ENCODE measurements at regions of chr12 and their contacts with region 1.

Region 1: GRCh38 chr12:76020731-76021672 is 10.6 kb downstream of the PHLDA1 start:
- DNase-seq: peak; percentile 62 to 87
- ATAC-seq: peak; percentile 56 to 61
- H3K4me3 ChIP-seq: no peak overlapping the region; the same call in 2 of the 3 replicates
- H3K27ac ChIP-seq: peak overlapping the region; percentile 91 to 92
- H3K4me1 ChIP-seq: peaks cover 63% of the 10 kb centered on the region
- CTCF ChIP-seq: no peak
- EP300 ChIP-seq: peak in 1 of 2 experiments; percentile 34; a peak in 1 of 5 replicates
- POLR2A ChIP-seq: no peak
- RAD21 ChIP-seq: peak in 1 of 2 experiments; percentile 29; a peak in 1 of 5 replicates

Region 2: GRCh38 chr12:75511116-75512048 is 509.6 kb before region 1 on chr12 and contains the start of gene KRR1:
- CTCF ChIA-PET with region 1: no interaction called
- POLR2A ChIA-PET with region 1: interaction called, 10 read pairs
- DNase-seq: peak; percentile 84 to 100
- ATAC-seq: peak; percentile 99 to 100
- H3K4me3 ChIP-seq: peak within 1 kb of the TSS; percentile 72
- H3K27ac ChIP-seq: peak within 1 kb of the TSS; percentile 82 to 89
- H3K4me1 ChIP-seq: peaks cover 14% of the 10 kb centered on the region
- CTCF ChIP-seq: no peak
- EP300 ChIP-seq: no peak
- POLR2A ChIP-seq: peak; percentile 41; the same call in 1 of the 2 replicates
- RAD21 ChIP-seq: no peak
- polyA plus RNA-seq, gene KRR1: 63.9 and 122 TPM in 2 replicates

Region 3: GRCh38 chr12:75977952-75978671 is 42.9 kb before region 1 on chr12:
- CTCF ChIA-PET with region 1: interaction called, 4 read pairs
- POLR2A ChIA-PET with region 1: interaction called, 17 read pairs
- DNase-seq: peak; percentile 94 to 100
- ATAC-seq: peak; percentile 90 to 97
- H3K4me3 ChIP-seq: 0 out of 3 replicates have a peak overlapping the region, but pooled peaks have one; percentile 12
- H3K27ac ChIP-seq: peak overlapping the region; percentile 96 to 98
- H3K4me1 ChIP-seq: peaks cover 67% of the 10 kb centered on the region
- CTCF ChIP-seq: no peak
- EP300 ChIP-seq: peak; percentile 99
- POLR2A ChIP-seq: no peak
- RAD21 ChIP-seq: peak; percentile 56 to 86

Region 4: GRCh38 chr12:75990189-75990912 is 30.7 kb before region 1 on chr12:
- CTCF ChIA-PET with region 1: interaction called, 3 read pairs
- POLR2A ChIA-PET with region 1: interaction called, 17 read pairs
- DNase-seq: peak; percentile 37 to 96
- ATAC-seq: peak; percentile 93 to 94
- H3K4me3 ChIP-seq: no peak overlapping the region
- H3K27ac ChIP-seq: peak overlapping the region; percentile 74 to 88
- H3K4me1 ChIP-seq: peaks cover 65% of the 10 kb centered on the region
- CTCF ChIP-seq: no peak
- EP300 ChIP-seq: peak; percentile 94 to 98
- POLR2A ChIP-seq: no peak
- RAD21 ChIP-seq: peak; percentile 18 to 74

Measured in A549 (cell line).